ENCODE measurements at regions of chr3 and their contacts with region 1.

Region 1: GRCh38 chr3:194583604-194584318 is 49.5 kb downstream of the TMEM44 start:
- DNase-seq: peak; percentile 87 to 98 (median 92)
- ATAC-seq: peak; percentile 92
- H3K4me3 ChIP-seq: peak overlapping the region; percentile 81
- H3K4me3 Mint-ChIP-seq: peak overlapping the region; percentile 84 to 96 (median 93)
- H3K27ac ChIP-seq: peak overlapping the region; percentile 79
- H3K27ac Mint-ChIP-seq: peak overlapping the region; percentile 93 to 99 (median 96)
- H3K4me1 ChIP-seq: peaks cover 8 to 11% of the 10 kb centered on the region in 2 donors
- H3K4me1 Mint-ChIP-seq: peaks cover 8 to 30% (median 12%) of the 10 kb centered on the region in 7 donors
- H3K27me3 ChIP-seq: no peaks in the 10 kb centered on the region
- H3K27me3 Mint-ChIP-seq: no peaks in the 10 kb centered on the region

Region 2: DNA sequence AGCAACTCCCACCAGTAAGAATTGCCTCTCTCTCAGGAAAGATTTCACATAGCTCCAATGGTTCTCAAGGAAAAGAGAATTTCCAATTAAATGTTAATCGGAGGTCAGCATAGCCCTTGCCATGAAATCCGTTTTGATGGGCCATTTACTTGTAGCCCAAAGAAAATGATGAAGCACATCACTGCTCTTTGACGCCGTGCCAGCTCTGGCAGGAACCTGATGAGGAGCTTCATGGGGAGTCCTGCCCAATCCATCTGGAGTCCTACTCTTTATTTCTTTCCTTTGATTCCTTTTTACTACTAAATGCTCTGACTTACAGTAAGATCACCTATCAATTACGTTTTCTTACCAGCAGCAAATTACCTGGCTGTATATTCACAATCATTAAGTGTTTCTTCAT is 1941.1 kb before region 1 on chr3:
- CTCF ChIA-PET with region 1: no interaction called
- POLR2A ChIA-PET with region 1: no interaction called
- intact Hi-C with region 1: no loop called
- DNase-seq: no peak
- ATAC-seq: no peak
- H3K4me3 ChIP-seq: no peak overlapping the region
- H3K4me3 Mint-ChIP-seq: no peak overlapping the region
- H3K27ac ChIP-seq: no peak overlapping the region
- H3K27ac Mint-ChIP-seq: no peak overlapping the region
- H3K4me1 ChIP-seq: no peaks in the 10 kb centered on the region
- H3K4me1 Mint-ChIP-seq: no peaks in the 10 kb centered on the region
- H3K27me3 ChIP-seq: no peaks in the 10 kb centered on the region
- H3K27me3 Mint-ChIP-seq: peaks cover 0 to 11% (median 0%) of the 10 kb centered on the region in 5 donors

Region 3: DNA sequence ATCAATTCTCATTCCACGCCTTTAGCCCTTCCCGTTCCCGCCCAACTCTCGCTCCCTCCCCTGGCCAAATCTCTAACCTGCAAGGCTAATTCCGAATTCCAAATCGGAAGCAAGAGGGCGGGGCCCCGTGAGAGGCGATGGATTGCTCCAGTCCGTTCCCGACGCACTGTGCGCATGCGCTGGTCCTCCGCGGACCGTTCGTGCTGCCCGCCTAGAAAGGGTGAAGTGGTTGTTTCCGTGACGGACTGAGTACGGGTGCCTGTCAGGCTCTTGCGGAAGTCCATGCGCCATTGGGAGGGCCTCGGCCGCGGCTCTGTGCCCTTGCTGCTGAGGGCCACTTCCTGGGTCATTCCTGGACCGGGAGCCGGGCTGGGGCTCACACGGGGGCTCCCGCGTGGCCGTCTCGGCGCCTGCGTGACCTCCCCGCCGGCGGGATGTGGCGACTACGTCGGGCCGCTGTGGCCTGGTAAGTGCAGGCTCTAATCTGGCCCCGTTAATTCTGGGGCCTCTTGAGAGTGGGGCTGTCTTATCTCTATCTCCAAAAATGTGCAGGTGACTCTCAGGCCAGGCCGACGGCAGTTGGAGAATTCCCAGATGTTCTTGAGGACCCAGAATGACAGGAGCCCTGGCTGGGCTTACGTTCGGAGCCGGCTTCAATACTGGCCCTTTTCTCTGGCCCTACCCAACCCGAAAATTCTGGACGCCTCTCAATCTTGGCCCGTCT is 990.7 kb before region 1 on chr3 and contains the start of gene OPA1:
- CTCF ChIA-PET with region 1: no interaction called
- POLR2A ChIA-PET with region 1: no interaction called
- intact Hi-C with region 1: loop called in 1 of 2 experiments (anchors 5 kb)
- DNase-seq: peak; percentile 73 to 91 (median 80)
- ATAC-seq: peak; percentile 96
- H3K4me3 ChIP-seq: peak within 1 kb of the TSS; percentile 78
- H3K4me3 Mint-ChIP-seq: peak within 1 kb of the TSS; percentile 93 to 98 (median 96)
- H3K27ac ChIP-seq: peak within 1 kb of the TSS; percentile 82
- H3K27ac Mint-ChIP-seq: peak within 1 kb of the TSS; percentile 92 to 98 (median 95)
- H3K4me1 ChIP-seq: peaks cover 18 to 20% of the 10 kb centered on the region in 2 donors
- H3K4me1 Mint-ChIP-seq: peaks cover 40 to 70% (median 59%) of the 10 kb centered on the region in 7 donors
- H3K27me3 ChIP-seq: no peaks in the 10 kb centered on the region
- H3K27me3 Mint-ChIP-seq: no peaks in the 10 kb centered on the region
- total RNA-seq, gene OPA1: 50.7 to 70.0 (median 59.4) TPM

Region 4: GRCh38 chr3:194395778-194396547 is 187.8 kb before region 1 on chr3:
- CTCF ChIA-PET with region 1: no interaction called
- POLR2A ChIA-PET with region 1: interaction called, 12 read pairs
- intact Hi-C with region 1: loop called (anchors 5 kb)
- DNase-seq: peak; percentile 29 to 86 (median 74)
- ATAC-seq: peak; percentile 85
- H3K4me3 ChIP-seq: peak overlapping the region; percentile 73
- H3K4me3 Mint-ChIP-seq: peak overlapping the region; percentile 82 to 98 (median 90)
- H3K27ac ChIP-seq: peak overlapping the region; percentile 81
- H3K27ac Mint-ChIP-seq: peak overlapping the region; percentile 73 to 98 (median 93)
- H3K4me1 ChIP-seq: peaks cover 4 to 26% of the 10 kb centered on the region in 2 donors
- H3K4me1 Mint-ChIP-seq: peaks cover 34 to 64% (median 47%) of the 10 kb centered on the region in 7 donors
- H3K27me3 ChIP-seq: no peaks in the 10 kb centered on the region
- H3K27me3 Mint-ChIP-seq: peaks cover 0 to 26% (median 0%) of the 10 kb centered on the region in 5 donors

Region 5: GRCh38 chr3:194486540-194487288 is 97.0 kb before region 1 on chr3 and contains the start of gene ATP13A3:
- CTCF ChIA-PET with region 1: no interaction called
- POLR2A ChIA-PET with region 1: interaction called, 17 read pairs
- intact Hi-C with region 1: loop called (anchors 1 kb)
- DNase-seq: peak; percentile 84 to 93 (median 91)
- ATAC-seq: peak; percentile 93
- H3K4me3 ChIP-seq: peak within 1 kb of the TSS; percentile 83
- H3K4me3 Mint-ChIP-seq: peak within 1 kb of the TSS; percentile 83 to 98 (median 93)
- H3K27ac ChIP-seq: peak within 1 kb of the TSS; percentile 82
- H3K27ac Mint-ChIP-seq: peak within 1 kb of the TSS; percentile 82 to 96 (median 94)
- H3K4me1 ChIP-seq: peaks cover 20 to 25% of the 10 kb centered on the region in 2 donors
- H3K4me1 Mint-ChIP-seq: peaks cover 41 to 60% (median 45%) of the 10 kb centered on the region in 7 donors
- H3K27me3 ChIP-seq: no peaks in the 10 kb centered on the region
- H3K27me3 Mint-ChIP-seq: no peaks in the 10 kb centered on the region
- total RNA-seq, gene ATP13A3: 46.5 to 81.8 (median 58.4) TPM

Region 6: GRCh38 chr3:194632809-194633348 is 49.1 kb after region 1 on chr3:
- CTCF ChIA-PET with region 1: no interaction called
- POLR2A ChIA-PET with region 1: no interaction called
- intact Hi-C with region 1: loop called in 1 of 2 experiments (anchors 2 kb)
- DNase-seq: no peak
- ATAC-seq: peak; percentile 59
- H3K4me3 ChIP-seq: peak overlapping the region; percentile 45
- H3K4me3 Mint-ChIP-seq: peak overlapping the region; percentile 67 to 91 (median 84)
- H3K27ac ChIP-seq: peak overlapping the region; percentile 60
- H3K27ac Mint-ChIP-seq: peak overlapping the region in 2 of 9 donors; percentile 14 to 54
- H3K4me1 ChIP-seq: no peaks in the 10 kb centered on the region
- H3K4me1 Mint-ChIP-seq: peaks cover 0 to 21% (median 8%) of the 10 kb centered on the region in 7 donors
- H3K27me3 ChIP-seq: no peaks in the 10 kb centered on the region
- H3K27me3 Mint-ChIP-seq: no peaks in the 10 kb centered on the region

Region 7: DNA sequence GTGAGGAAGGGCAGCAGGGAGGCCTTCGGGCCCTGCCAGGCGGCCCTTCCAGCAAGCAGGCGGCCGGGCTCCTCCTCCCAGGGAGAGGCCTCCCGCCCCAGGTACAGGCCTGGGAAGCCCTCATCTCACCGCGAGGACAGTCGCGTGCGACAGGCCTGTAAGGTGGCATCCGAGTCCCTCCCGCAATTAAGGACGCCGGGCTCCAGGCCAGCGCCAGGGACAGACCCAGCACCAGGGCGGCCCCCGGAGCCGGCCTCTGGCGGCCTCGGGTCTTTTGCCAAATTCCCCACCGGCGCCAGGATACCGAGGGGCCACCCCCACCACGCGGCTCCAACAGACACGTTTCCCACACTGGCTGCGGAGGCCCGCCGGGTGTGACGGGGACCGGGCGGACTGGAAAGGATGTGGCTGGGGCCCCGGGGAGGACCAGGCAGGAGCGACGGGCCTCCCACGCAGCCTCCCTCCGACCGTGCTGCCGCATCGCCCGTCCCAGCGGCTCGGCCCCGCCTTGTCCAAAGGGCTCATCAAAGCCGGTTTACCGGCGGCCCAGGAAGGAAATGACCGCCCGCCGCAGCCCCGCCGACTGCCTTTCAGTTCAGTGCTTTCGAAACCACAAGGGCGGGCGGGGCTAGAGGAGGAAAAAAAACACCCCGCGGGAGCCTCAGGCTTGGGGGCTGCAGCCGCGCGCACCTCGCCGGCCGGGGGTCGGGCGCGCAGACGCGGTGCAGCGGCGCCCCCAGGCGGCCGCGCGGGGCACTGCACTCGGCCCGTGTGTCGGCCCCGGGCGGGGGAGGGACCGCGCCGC is 675.9 kb after region 1 on chr3:
- CTCF ChIA-PET with region 1: no interaction called
- POLR2A ChIA-PET with region 1: no interaction called
- intact Hi-C with region 1: loop called in 1 of 2 experiments (anchors 2 kb)
- DNase-seq: peak; percentile 80 to 90 (median 84)
- ATAC-seq: peak; percentile 94
- H3K4me3 ChIP-seq: peak overlapping the region; percentile 36
- H3K4me3 Mint-ChIP-seq: peak overlapping the region; percentile 32 to 84 (median 64)
- H3K27ac ChIP-seq: peak overlapping the region; percentile 73
- H3K27ac Mint-ChIP-seq: peak overlapping the region in 7 of 9 donors; percentile 46 to 88 (median 84)
- H3K4me1 ChIP-seq: peaks cover 17 to 19% of the 10 kb centered on the region in 2 donors
- H3K4me1 Mint-ChIP-seq: peaks cover 13 to 24% (median 19%) of the 10 kb centered on the region in 7 donors
- H3K27me3 ChIP-seq: no peaks in the 10 kb centered on the region
- H3K27me3 Mint-ChIP-seq: no peaks in the 10 kb centered on the region

Measured in naive thymus-derived CD4-positive, alpha-beta T cell (primary cell).